ENCODE measurements at regions of chr15 and their contacts with region 1.

Region 1: DNA sequence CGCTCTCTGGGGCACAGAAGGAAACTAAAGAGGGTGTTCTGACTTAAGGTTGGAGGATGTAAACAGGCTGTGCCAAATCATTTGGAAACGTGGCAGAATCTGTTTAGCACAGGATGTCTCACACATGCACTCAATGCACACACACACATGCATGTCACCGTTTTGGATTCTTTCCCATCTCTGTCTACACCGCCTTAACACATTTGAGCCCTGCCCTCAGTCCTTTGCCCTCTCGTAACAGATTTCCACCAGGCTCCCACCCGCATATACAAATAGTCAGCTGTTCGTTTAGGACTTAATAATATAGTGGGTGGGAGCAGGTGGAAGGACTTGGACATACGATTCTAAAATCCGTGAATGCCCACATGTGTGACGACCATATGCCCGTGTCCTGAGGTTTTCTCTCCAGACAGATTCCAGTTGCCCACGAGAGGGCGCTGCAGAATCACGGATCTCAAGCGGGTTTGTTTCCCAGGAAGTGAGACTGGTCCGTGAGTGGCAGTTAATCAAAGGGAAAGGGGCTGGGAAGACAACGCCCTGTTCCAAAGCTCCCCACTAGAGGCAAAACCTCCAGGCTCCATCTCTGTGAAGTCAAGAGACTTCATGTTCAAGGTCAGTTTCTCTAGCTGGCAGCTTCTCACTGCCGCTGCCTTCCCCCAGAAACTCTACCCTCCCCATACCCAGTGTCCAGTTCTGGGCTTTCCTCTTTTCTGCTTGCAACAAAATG is 44.5 kb downstream of the NOX5 start:
- DNase-seq: peak; percentile 92 to 99
- ATAC-seq: peak; percentile 79 to 92
- H3K4me3 ChIP-seq: no peak overlapping the region
- H3K27ac ChIP-seq: peak overlapping the region; percentile 27 to 63; a peak in 5 of 6 replicates
- H3K4me1 ChIP-seq: peaks cover 26% of the 10 kb centered on the region
- CTCF ChIP-seq: peak; percentile 99
- EP300 ChIP-seq: no peak
- POLR2A ChIP-seq: no peak
- RAD21 ChIP-seq: peak; percentile 99

Region 2: GRCh38 chr15:68031404-68031803 is 1027.6 kb before region 1 on chr15:
- CTCF ChIA-PET with region 1: no interaction called
- POLR2A ChIA-PET with region 1: no interaction called
- DNase-seq: no peak
- ATAC-seq: no peak
- H3K4me3 ChIP-seq: no peak overlapping the region
- H3K27ac ChIP-seq: no peak overlapping the region
- H3K4me1 ChIP-seq: peaks cover 2% of the 10 kb centered on the region; the same call in 2 of the 3 replicates
- CTCF ChIP-seq: no peak
- EP300 ChIP-seq: no peak
- POLR2A ChIP-seq: no peak
- RAD21 ChIP-seq: no peak

Region 3: GRCh38 chr15:68749793-68750192 is 309.2 kb before region 1 on chr15:
- CTCF ChIA-PET with region 1: no interaction called
- POLR2A ChIA-PET with region 1: no interaction called
- DNase-seq: no peak
- ATAC-seq: no peak
- H3K4me3 ChIP-seq: no peak overlapping the region
- H3K27ac ChIP-seq: no peak overlapping the region
- H3K4me1 ChIP-seq: no peaks in the 10 kb centered on the region
- CTCF ChIP-seq: no peak
- EP300 ChIP-seq: no peak
- POLR2A ChIP-seq: no peak
- RAD21 ChIP-seq: no peak

Region 4: DNA sequence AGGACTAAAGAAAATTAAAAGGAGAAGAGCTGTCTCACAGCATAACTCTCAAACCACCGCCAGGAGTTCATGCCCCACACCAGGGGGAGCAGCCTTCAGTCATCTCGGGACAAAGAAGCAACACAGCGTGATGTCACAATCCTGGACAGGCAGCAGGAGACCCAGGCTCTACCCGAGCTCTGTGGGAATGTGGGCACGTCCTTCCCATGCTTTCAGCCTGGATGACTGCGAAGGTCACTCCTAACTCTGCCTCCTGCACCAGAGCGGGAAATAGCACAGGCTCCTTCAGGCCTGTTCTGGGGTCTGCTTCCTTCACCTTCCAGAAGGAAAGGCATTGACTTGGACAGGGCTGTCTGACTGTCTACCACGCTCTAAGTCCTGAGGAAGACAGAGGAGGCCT is 13.2 kb before region 1 on chr15:
- CTCF ChIA-PET with region 1: interaction called, 43 read pairs
- POLR2A ChIA-PET with region 1: no interaction called
- DNase-seq: peak in 1 of 2 experiments; percentile 58
- ATAC-seq: peak; percentile 67 to 89; a peak in 5 of 6 replicates
- H3K4me3 ChIP-seq: no peak overlapping the region
- H3K27ac ChIP-seq: peak overlapping the region in 1 of 2 experiments; percentile 65; a peak in 3 of 6 replicates
- H3K4me1 ChIP-seq: peaks cover 24% of the 10 kb centered on the region
- CTCF ChIP-seq: no peak
- EP300 ChIP-seq: no peak
- POLR2A ChIP-seq: no peak
- RAD21 ChIP-seq: no peak

Region 5: DNA sequence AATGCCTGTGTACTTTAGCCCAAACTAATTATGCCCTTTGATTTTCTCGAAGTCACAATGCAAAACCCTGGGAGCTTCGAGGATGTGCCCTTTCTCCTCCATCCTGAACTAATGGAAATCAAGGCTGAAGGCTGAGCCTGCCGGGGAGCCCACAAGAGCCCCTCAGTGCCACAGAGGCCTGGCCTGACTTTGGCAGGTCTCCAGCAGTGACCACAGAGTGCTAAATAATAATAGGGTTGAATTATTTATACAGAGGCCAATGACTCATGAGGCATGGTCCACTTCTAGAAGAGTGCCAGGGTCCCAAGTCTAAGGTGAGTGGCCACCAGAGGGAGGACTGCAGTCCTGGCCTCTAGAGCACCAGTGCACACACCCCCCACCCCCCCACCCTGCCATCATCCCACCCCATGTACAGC is 82.3 kb after region 1 on chr15:
- CTCF ChIA-PET with region 1: interaction called, 16 read pairs
- POLR2A ChIA-PET with region 1: no interaction called
- DNase-seq: peak; percentile 60 to 63
- ATAC-seq: peak; percentile 72 to 87; a peak in 5 of 6 replicates
- H3K4me3 ChIP-seq: no peak overlapping the region
- H3K27ac ChIP-seq: no peak overlapping the region
- H3K4me1 ChIP-seq: peaks cover 9% of the 10 kb centered on the region
- CTCF ChIP-seq: no peak; the same call in 1 of the 3 replicates
- EP300 ChIP-seq: no peak
- POLR2A ChIP-seq: no peak
- RAD21 ChIP-seq: peak in 1 of 2 experiments; percentile 7; a peak in 1 of 5 replicates

Region 6: DNA sequence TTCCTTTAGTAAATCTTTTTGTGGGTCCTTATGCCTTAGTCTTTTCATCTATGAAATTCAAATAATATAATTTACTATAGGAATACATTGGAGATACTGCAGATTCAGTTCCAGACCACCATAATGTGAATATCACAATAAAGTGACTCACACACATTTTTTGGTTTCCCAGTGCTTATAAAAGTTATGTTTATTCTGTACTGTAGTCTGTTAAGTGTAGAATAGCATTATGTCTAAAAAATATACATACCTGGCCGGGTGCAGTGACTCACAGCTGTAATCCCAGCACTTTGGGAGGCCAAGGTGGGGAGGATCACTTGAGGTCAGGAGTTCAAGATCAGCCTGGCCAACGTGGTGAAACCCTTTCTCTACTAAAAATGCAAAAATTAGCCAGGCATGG is 185.8 kb after region 1 on chr15:
- CTCF ChIA-PET with region 1: interaction called, 12 read pairs
- POLR2A ChIA-PET with region 1: no interaction called
- DNase-seq: no peak
- ATAC-seq: no peak
- H3K4me3 ChIP-seq: no peak overlapping the region
- H3K27ac ChIP-seq: no peak overlapping the region
- H3K4me1 ChIP-seq: 0 out of 3 replicates have a peak, but pooled peaks cover 3% of the 10 kb centered on the region
- CTCF ChIP-seq: no peak
- EP300 ChIP-seq: no peak
- POLR2A ChIP-seq: no peak
- RAD21 ChIP-seq: no peak

Region 7: DNA sequence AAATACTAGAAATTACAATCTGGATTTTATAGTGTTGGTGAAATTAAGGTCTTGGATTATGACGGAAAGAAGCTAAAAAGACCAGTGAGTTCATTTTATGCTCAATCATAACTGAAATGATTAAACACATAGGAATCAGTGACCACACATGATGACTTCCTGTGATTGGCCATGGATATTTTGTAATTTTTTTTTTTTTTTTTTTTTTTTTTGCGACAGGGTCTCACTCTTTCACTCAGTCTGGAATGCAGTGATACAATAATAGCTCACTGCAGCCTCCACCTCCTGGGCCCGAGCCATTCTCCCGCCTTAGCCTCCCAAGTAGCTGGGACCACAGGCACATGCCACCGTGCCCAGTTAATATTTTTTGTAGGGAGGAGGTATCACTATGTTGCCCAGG is 287.1 kb after region 1 on chr15:
- CTCF ChIA-PET with region 1: interaction called, 13 read pairs
- POLR2A ChIA-PET with region 1: no interaction called
- DNase-seq: no peak
- ATAC-seq: no peak; a peak in 1 of 6 replicates
- H3K4me3 ChIP-seq: no peak overlapping the region
- H3K27ac ChIP-seq: peak overlapping the region in 1 of 2 experiments; percentile 39; a peak in 1 of 6 replicates
- H3K4me1 ChIP-seq: peaks cover 16% of the 10 kb centered on the region
- CTCF ChIP-seq: no peak
- EP300 ChIP-seq: no peak
- POLR2A ChIP-seq: no peak
- RAD21 ChIP-seq: no peak

Region 8: GRCh38 chr15:69413822-69414700 is 355.1 kb after region 1 on chr15 and contains the start of gene KIF23:
- CTCF ChIA-PET with region 1: interaction called, 87 read pairs
- POLR2A ChIA-PET with region 1: no interaction called
- DNase-seq: peak; percentile 97 to 99
- ATAC-seq: peak; percentile 93 to 96
- H3K4me3 ChIP-seq: peak within 1 kb of the TSS; percentile 83
- H3K27ac ChIP-seq: peak within 1 kb of the TSS; percentile 83 to 93
- H3K4me1 ChIP-seq: peaks cover 43% of the 10 kb centered on the region
- CTCF ChIP-seq: no peak
- EP300 ChIP-seq: no peak
- POLR2A ChIP-seq: peak; percentile 56
- RAD21 ChIP-seq: no peak
- polyA plus RNA-seq, gene KIF23: 79.5 and 117 TPM in 2 replicates

Measured in A549 (cell line).